Common myeloid progenitor, CD34-positive (primary cell): ENCODE measurements at regions of chr10 and their contacts with region 1.

Region 1: GRCh38 chr10:70540089-70540788 is 61.7 kb downstream of the PALD1 start:
- DNase-seq: peak; percentile 44 to 59 (median 51)
- H3K4me3 ChIP-seq: no peak overlapping the region
- H3K27ac ChIP-seq: no peak overlapping the region
- H3K4me1 ChIP-seq: no peaks in the 10 kb centered on the region
- H3K27me3 ChIP-seq: no peaks in the 10 kb centered on the region

Region 2: DNA sequence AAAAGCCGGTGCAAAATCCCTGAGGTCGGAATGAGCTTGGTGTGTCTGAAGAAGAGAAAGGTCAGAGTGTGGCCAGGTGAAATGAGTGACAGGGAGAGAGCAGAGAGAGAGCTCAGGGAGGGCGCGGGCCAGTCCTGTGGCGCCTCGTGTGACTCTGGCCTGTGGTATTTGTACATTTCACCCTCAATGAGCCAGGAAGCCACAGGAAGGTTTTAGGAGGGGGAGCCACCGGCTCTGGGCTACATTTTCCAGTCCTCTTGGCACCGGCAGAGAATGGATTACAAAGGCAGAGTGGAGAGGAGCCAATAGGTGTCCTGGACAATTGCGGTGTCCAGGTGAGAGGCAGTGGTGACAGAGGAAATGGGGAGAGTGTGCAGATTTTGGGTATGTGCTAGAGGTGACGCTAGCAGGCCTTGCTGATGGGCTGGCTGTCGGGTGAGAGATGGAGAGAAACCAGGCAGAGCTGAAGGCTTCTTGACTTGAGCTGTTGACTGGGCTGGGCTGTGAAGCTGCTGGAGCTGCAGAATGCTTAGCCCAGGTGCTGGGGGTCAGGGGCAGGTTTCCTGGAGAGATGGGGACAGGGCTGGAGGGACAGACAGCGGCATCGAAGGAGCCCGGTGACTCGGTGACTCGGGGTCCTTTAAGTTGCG is 700.4 kb before region 1 on chr10:
- CTCF ChIA-PET with region 1: no interaction called
- POLR2A ChIA-PET with region 1: no interaction called
- DNase-seq: no peak
- H3K4me3 ChIP-seq: no peak overlapping the region
- H3K27ac ChIP-seq: no peak overlapping the region
- H3K4me1 ChIP-seq: peaks cover 0 to 22% (median 17%) of the 10 kb centered on the region in 4 experiments
- H3K27me3 ChIP-seq: peaks cover 0 to 4% (median 0%) of the 10 kb centered on the region in 5 experiments

Region 3: GRCh38 chr10:70508912-70509756 is 31.1 kb before region 1 on chr10:
- CTCF ChIA-PET with region 1: interaction called, 10 read pairs
- POLR2A ChIA-PET with region 1: no interaction called
- DNase-seq: peak; percentile 40 to 95 (median 89)
- H3K4me3 ChIP-seq: peak overlapping the region in 3 of 7 experiments; percentile 20 to 52 (median 51)
- H3K27ac ChIP-seq: no peak overlapping the region
- H3K4me1 ChIP-seq: peaks cover 4 to 47% (median 29%) of the 10 kb centered on the region in 4 experiments
- H3K27me3 ChIP-seq: no peaks in the 10 kb centered on the region

Region 4: GRCh38 chr10:70518695-70519094 is 21.5 kb before region 1 on chr10:
- CTCF ChIA-PET with region 1: interaction called, 10 read pairs
- POLR2A ChIA-PET with region 1: no interaction called
- DNase-seq: no peak
- H3K4me3 ChIP-seq: no peak overlapping the region
- H3K27ac ChIP-seq: no peak overlapping the region
- H3K4me1 ChIP-seq: peaks cover 0 to 17% (median 4%) of the 10 kb centered on the region in 4 experiments
- H3K27me3 ChIP-seq: no peaks in the 10 kb centered on the region

Region 5: GRCh38 chr10:70528726-70529362 is 11.4 kb before region 1 on chr10:
- CTCF ChIA-PET with region 1: interaction called, 29 read pairs
- POLR2A ChIA-PET with region 1: no interaction called
- DNase-seq: peak; percentile 30 to 54 (median 36)
- H3K4me3 ChIP-seq: no peak overlapping the region
- H3K27ac ChIP-seq: no peak overlapping the region
- H3K4me1 ChIP-seq: peaks cover 0 to 21% (median 10%) of the 10 kb centered on the region in 4 experiments
- H3K27me3 ChIP-seq: no peaks in the 10 kb centered on the region